ENCODE measurements at regions of chr9 and their contacts with region 1.

Region 1: GRCh38 chr9:132575005-132575609 is 7.3 kb upstream of the BARHL1 start:
- DNase-seq: peak; percentile 85
- H3K4me3 ChIP-seq: no peak overlapping the region
- H3K27ac ChIP-seq: no peak overlapping the region
- H3K4me1 ChIP-seq: no peaks in the 10 kb centered on the region
- H3K27me3 ChIP-seq: peaks cover 82% of the 10 kb centered on the region
- CTCF ChIP-seq: peak; percentile 77

Region 2: GRCh38 chr9:131755541-131756198 is 819.4 kb before region 1 on chr9:
- CTCF ChIA-PET with region 1: no interaction called
- POLR2A ChIA-PET with region 1: no interaction called
- intact Hi-C with region 1: loop called (anchors 5 kb)
- DNase-seq: peak; percentile 90
- H3K4me3 ChIP-seq: no peak overlapping the region
- H3K27ac ChIP-seq: no peak overlapping the region
- H3K4me1 ChIP-seq: no peaks in the 10 kb centered on the region
- H3K27me3 ChIP-seq: peaks cover 20% of the 10 kb centered on the region
- CTCF ChIP-seq: peak; percentile 90

Region 3: DNA sequence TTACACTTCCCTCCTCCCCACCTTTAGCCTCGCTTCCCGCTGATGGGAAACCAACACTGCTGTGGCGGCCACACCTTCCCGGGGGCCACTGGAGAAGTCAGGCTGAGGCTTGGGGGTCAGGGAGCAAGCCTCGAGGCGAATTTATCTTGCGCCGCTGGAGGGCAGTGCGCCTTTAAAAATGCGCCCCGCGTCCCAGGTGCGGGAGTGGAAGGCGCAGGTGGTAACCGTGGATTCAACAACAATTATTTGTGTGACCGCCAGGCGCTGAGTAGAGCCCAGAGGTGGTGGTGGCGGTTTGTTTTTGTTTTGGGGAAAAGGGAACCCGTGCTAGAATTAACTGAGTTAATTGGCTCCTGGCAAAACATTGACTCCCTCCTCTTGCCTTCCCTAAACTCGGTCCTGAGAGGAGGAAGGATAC is 164.0 kb before region 1 on chr9:
- CTCF ChIA-PET with region 1: interaction called, 3 read pairs
- POLR2A ChIA-PET with region 1: no interaction called
- intact Hi-C with region 1: loop called (anchors 1 kb)
- DNase-seq: peak; percentile 34
- H3K4me3 ChIP-seq: no peak overlapping the region
- H3K27ac ChIP-seq: no peak overlapping the region
- H3K4me1 ChIP-seq: no peaks in the 10 kb centered on the region
- H3K27me3 ChIP-seq: peaks cover 69% of the 10 kb centered on the region
- CTCF ChIP-seq: peak; percentile 75

Region 4: GRCh38 chr9:132507746-132508469 is 67.2 kb before region 1 on chr9:
- CTCF ChIA-PET with region 1: no interaction called
- POLR2A ChIA-PET with region 1: no interaction called
- intact Hi-C with region 1: loop called (anchors 1 kb)
- DNase-seq: peak; percentile 77
- H3K4me3 ChIP-seq: no peak overlapping the region
- H3K27ac ChIP-seq: no peak overlapping the region
- H3K4me1 ChIP-seq: no peaks in the 10 kb centered on the region
- H3K27me3 ChIP-seq: peaks cover 36% of the 10 kb centered on the region
- CTCF ChIP-seq: peak; percentile 86

Region 5: GRCh38 chr9:133184962-133185361 is 609.9 kb after region 1 on chr9:
- CTCF ChIA-PET with region 1: no interaction called
- POLR2A ChIA-PET with region 1: no interaction called
- intact Hi-C with region 1: no loop called
- DNase-seq: peak; percentile 90
- H3K4me3 ChIP-seq: no peak overlapping the region
- H3K27ac ChIP-seq: no peak overlapping the region
- H3K4me1 ChIP-seq: no peaks in the 10 kb centered on the region
- H3K27me3 ChIP-seq: peaks cover 47% of the 10 kb centered on the region
- CTCF ChIP-seq: peak; percentile 71

Measured in A673 (cell line).